Heart right ventricle (tissue), 16 donors: ENCODE measurements at regions of chr4 and their contacts with region 1.

Region 1: DNA sequence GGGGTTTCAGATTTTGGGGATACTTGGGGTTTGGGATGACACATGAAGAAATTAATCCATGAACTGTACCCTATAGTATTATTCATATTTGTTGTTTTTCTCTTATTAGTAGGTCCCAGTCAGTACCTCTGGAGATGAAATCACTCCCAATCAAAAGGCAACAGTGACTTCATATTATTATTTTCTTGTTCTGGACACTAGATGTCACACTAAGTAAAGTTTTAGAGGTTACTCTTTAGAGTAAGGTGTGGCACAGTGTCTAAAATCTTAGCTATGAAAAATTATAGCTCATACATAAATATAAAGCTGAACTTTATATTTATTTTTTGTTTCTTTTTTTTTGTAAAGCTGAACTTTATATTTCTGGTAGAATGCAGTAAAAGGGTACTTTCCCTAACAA is 35.1 kb downstream of the FAM114A1 start:
- DNase-seq: no peak
- ATAC-seq: peak in 5 of 8 donors; percentile 60 to 74 (median 70)
- H3K4me3 ChIP-seq: no peak overlapping the region
- H3K27ac ChIP-seq: no peak overlapping the region
- H3K4me1 ChIP-seq: peaks cover 0 to 27% (median 0%) of the 10 kb centered on the region in 9 donors
- H3K27me3 ChIP-seq: no peaks in the 10 kb centered on the region
- CTCF ChIP-seq: peak in 8 of 9 donors; percentile 15 to 61 (median 46)

Region 2: DNA sequence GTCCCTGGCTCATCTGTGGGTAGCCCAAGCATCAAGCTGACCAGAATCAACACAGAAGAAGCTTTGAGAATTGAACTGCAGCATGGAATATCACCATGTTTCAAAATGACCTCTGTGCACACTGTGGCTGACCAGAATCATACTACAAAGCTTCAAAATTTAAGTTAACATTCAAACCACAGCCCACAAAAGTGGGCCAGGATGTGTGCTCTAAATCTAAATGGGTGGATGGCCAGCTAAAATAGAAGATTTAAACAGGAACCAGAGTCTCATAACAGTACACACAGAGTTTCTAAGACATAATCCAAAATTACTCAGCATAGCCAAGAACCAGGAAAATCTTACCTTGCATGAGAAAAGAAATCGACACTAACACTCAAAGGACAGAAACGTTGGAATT is 192.6 kb before region 1 on chr4:
- intact Hi-C with region 1: no loop called
- DNase-seq: no peak
- ATAC-seq: no peak
- H3K4me3 ChIP-seq: no peak overlapping the region
- H3K27ac ChIP-seq: no peak overlapping the region
- H3K4me1 ChIP-seq: peaks cover 0 to 2% (median 0%) of the 10 kb centered on the region in 9 donors
- H3K27me3 ChIP-seq: no peaks in the 10 kb centered on the region
- CTCF ChIP-seq: no peak

Region 3: DNA sequence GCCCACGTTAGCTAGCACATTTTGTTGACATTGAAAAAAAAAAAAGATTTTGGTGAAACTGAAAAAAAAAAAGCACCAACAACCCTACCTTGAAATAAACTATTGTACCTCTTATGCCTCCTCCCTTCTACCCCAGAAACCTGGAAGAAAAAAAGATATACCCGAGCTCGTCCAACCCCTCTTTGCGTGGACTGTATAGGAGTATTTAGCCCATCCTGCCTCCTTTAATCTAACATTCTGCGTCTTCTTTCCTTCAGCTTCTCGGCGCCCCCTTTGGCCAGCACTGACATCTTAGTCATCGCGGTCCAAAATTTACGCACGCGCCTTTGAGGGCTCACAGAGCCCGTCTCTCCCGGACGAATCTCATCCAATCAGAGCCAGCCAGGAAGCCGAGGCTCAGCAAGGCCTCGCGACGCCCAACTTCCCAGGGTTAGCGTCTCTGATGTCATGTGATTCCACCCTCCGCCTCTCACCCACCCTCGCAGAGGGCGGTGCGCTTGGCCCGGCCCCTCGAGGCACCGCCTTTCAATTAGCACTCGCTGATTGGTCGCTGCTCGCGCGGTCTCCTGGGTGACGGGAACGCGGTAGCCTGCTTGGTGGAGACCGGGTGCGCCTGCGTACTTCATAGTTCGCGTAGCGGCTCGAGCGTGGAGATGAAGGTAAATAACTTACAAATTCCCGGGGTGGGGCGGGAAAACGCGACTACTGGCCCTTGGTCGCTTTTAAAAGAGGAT is 279.4 kb after region 1 on chr4 and contains the start of gene WDR19:
- intact Hi-C with region 1: loop called in 1 of 10 experiments (anchors 5 kb)
- DNase-seq: peak; percentile 98
- ATAC-seq: peak; percentile 99 to 100 (median 100)
- H3K4me3 ChIP-seq: peak within 1 kb of the TSS; percentile 62 to 93 (median 73)
- H3K27ac ChIP-seq: peak within 1 kb of the TSS; percentile 28 to 84 (median 60)
- H3K4me1 ChIP-seq: peaks cover 0 to 18% (median 10%) of the 10 kb centered on the region in 9 donors
- H3K27me3 ChIP-seq: no peaks in the 10 kb centered on the region
- CTCF ChIP-seq: peak; percentile 11 to 71 (median 48)
- total RNA-seq, gene WDR19: 4.1 to 14.6 (median 6.7) TPM

Region 4: GRCh38 chr4:39458505-39459300 is 556.0 kb after region 1 on chr4 and contains the starts of genes LIAS and RPL9:
- intact Hi-C with region 1: loop called in 1 of 10 experiments (anchors 10 kb)
- DNase-seq: peak; percentile 94 to 96
- ATAC-seq: peak; percentile 95 to 98 (median 97)
- H3K4me3 ChIP-seq: peak within 1 kb of the TSS; percentile 73 to 98 (median 80)
- H3K27ac ChIP-seq: peak within 1 kb of the TSS; percentile 71 to 98 (median 93)
- H3K4me1 ChIP-seq: peaks cover 5 to 43% (median 33%) of the 10 kb centered on the region in 9 donors
- H3K27me3 ChIP-seq: no peaks in the 10 kb centered on the region
- CTCF ChIP-seq: no peak
- total RNA-seq, gene LIAS: 16.0 to 32.4 (median 27.0) TPM
- total RNA-seq, gene RPL9: 546 to 1,064 (median 776) TPM